Pancreas (tissue), 10 donors: ENCODE measurements at regions of chr10 and their contacts with region 1.

Region 1: DNA sequence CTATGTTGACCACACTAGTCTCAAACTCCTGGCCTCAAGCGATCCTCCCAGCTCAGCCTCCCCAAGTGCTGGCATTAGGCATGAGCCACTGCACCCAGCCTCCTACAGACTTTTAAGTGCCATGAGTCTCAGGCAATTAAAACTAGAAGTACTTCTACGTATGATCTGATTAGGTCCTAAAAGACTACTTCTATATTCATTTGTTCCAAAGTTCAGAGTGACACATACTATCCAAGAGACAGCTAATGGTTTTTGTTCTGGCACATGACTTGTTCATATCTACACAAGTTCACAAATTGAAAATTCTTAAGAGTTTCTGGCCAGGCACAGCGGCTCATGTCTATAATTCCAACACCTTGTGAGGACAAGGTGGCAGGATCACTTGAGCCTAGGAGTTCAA is 11.7 kb downstream of the ARHGAP19 start:
- DNase-seq: no peak
- ATAC-seq: no peak
- H3K4me3 ChIP-seq: no peak overlapping the region
- H3K27ac ChIP-seq: no peak overlapping the region
- H3K4me1 ChIP-seq: peaks cover 0 to 15% (median 4%) of the 10 kb centered on the region in 3 donors
- H3K27me3 ChIP-seq: no peaks in the 10 kb centered on the region
- CTCF ChIP-seq: no peak

Region 2: GRCh38 chr10:96863922-96864543 is 416.8 kb before region 1 on chr10:
- intact Hi-C with region 1: no loop called
- DNase-seq: no peak
- ATAC-seq: peak; percentile 84 to 93 (median 88)
- H3K4me3 ChIP-seq: no peak overlapping the region
- H3K27ac ChIP-seq: peak overlapping the region; percentile 23 to 76 (median 54)
- H3K4me1 ChIP-seq: peaks cover 17 to 39% (median 34%) of the 10 kb centered on the region in 3 donors
- H3K27me3 ChIP-seq: no peaks in the 10 kb centered on the region
- CTCF ChIP-seq: no peak

Region 3: GRCh38 chr10:97157578-97158095 is 123.1 kb before region 1 on chr10:
- intact Hi-C with region 1: no loop called
- DNase-seq: no peak
- ATAC-seq: no peak
- H3K4me3 ChIP-seq: no peak overlapping the region
- H3K27ac ChIP-seq: no peak overlapping the region
- H3K4me1 ChIP-seq: no peaks in the 10 kb centered on the region
- H3K27me3 ChIP-seq: no peaks in the 10 kb centered on the region
- CTCF ChIP-seq: no peak

Region 4: DNA sequence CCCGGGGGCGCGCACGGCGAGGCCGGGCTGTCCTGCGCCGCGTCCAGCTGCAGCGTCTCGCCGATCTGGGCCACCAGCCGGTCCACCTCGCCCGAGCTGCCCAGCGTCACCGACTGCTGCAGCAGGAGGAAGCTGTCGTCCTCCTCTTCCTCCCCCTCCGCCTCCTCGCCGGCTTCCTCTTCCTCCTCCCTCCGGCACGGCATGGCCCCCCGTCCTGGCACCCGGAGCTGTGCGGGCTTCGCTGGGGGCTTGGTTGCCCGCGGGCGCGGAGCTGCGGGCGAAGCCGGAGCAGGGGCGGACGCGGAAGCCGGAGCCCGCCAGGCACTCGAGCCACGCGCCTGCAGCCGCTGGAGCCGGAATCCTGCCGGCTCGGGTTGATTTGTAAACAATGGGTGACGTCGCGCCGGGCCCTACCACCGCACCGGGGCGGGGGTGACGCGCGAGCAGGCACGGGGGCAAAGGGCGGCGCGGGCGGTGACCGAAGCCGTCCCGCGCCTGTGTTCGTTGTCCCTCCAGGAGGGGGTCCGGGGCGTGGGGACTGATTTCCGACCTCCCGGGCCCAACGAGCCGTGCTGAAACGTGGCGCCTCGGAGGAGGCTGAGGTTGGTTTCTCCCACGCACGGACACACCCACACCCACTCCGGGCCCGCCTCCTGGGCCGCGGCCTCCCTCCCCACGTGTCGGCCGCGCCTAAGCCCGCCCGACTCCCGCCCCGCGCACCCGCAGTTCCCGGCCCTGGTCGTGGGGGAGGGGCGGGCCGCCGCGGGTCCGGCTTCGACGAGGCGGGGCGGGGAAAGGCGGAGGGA is 53.8 kb after region 1 on chr10 and contains the start of gene FRAT2:
- intact Hi-C with region 1: loop called in 1 of 3 experiments (anchors 10 kb)
- DNase-seq: peak; percentile 89 to 95 (median 92)
- ATAC-seq: peak; percentile 86 to 95 (median 90)
- H3K4me3 ChIP-seq: peak within 1 kb of the TSS; percentile 73 to 92 (median 82)
- H3K27ac ChIP-seq: peak within 1 kb of the TSS; percentile 79 to 96 (median 90)
- H3K4me1 ChIP-seq: peaks cover 11 to 36% (median 25%) of the 10 kb centered on the region in 3 donors
- H3K27me3 ChIP-seq: no peaks in the 10 kb centered on the region
- CTCF ChIP-seq: no peak
- total RNA-seq, gene FRAT2: 8.7 to 15.0 (median 9.9) TPM

Region 5: DNA sequence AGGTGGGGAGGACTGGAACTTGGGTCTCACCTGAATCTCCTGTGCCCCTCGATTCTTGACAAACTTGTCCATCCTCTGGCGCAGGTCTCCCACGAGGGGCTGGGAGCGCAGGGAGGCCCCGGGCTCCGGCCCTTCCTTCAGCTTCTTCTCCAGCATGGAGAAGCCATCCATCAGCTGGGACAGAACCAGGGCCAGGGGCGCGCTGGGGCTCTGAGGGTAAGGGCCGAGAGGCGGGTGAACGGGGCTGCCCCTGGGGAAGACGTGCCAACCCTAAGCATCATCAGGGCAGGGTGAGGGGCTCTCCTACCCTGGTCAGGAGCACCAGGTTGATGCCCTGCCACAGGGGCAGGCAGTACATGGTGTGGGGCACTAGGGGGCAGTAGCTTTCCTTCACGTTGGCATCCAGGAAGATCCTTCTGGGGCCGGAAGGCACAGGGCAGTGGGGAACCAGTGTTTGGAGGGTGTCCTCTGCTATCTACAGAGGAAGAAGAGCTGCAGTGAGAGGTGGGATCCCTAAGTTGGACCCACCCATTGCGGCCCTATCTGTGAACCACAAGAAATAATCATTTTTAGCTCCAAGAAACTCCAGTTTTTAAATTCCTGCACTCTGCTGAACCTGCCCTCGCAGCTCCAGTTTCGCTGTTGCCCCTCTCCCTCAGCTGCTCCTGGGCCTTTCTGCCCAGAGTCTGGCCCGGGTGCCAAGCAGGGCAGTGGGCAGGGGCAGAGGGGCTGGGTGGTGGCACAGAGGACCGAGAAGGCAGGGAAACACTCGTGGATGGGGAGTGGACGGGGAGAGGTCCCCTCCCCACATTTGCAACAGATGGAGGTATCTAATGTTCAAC is 1144.9 kb after region 1 on chr10:
- intact Hi-C with region 1: no loop called
- DNase-seq: peak in 5 of 6 donors; percentile 25 to 73 (median 61)
- ATAC-seq: peak; percentile 69 to 91 (median 79)
- H3K4me3 ChIP-seq: no peak overlapping the region
- H3K27ac ChIP-seq: no peak overlapping the region
- H3K4me1 ChIP-seq: no peaks in the 10 kb centered on the region
- H3K27me3 ChIP-seq: no peaks in the 10 kb centered on the region
- CTCF ChIP-seq: peak; percentile 63 to 68 (median 67)